Right lobe of liver (tissue), 6 donors: ENCODE measurements at regions of chr20 and their contacts with region 1.

Region 1: GRCh38 chr20:23606652-23607049 is 934 bp upstream of the CST9 start:
- DNase-seq: peak; percentile 72 to 79 (median 78)
- ATAC-seq: peak; percentile 91 to 98 (median 96)
- H3K4me3 ChIP-seq: no peak overlapping the region
- H3K27ac ChIP-seq: no peak overlapping the region
- H3K4me1 ChIP-seq: no peaks in the 10 kb centered on the region
- H3K27me3 ChIP-seq: no peaks in the 10 kb centered on the region
- CTCF ChIP-seq: peak; percentile 81 to 87 (median 83)
- POLR2A ChIP-seq: no peak

Region 2: GRCh38 chr20:23349338-23350195 is 257.1 kb before region 1 on chr20:
- intact Hi-C with region 1: loop called in 1 of 2 experiments (anchors 10 kb)
- DNase-seq: peak in 2 of 3 donors; percentile 79 to 84
- ATAC-seq: peak; percentile 72 to 77 (median 76)
- H3K4me3 ChIP-seq: peak overlapping the region; percentile 91 to 98 (median 94)
- H3K27ac ChIP-seq: peak overlapping the region; percentile 95 to 98 (median 96)
- H3K4me1 ChIP-seq: peaks cover 0 to 16% (median 3%) of the 10 kb centered on the region in 4 donors
- H3K27me3 ChIP-seq: no peaks in the 10 kb centered on the region
- CTCF ChIP-seq: peak; percentile 43 to 47 (median 44)
- POLR2A ChIP-seq: no peak

Region 3: DNA sequence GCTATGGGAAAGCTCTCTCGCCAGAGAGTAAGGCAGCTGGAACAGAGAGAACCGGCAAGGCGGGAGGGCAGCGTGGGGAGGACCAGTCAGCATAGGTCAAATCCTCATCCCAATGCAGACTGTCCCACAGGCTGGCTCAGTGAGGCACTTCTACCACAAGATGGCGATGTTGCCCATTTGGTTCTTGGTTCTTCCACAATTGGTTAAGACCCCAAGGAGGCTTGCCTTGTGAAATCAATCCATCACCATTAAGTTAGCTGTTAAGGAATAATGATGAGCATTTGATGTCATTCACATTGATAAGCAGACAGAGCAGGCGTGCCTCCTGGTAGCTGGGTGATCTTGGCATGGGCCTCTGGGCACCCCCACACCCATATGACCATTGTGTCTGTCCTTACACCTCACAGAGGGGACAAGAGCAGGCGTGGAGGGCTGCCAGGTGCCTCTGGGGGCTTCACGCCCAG is 164.8 kb before region 1 on chr20:
- intact Hi-C with region 1: loop called (anchors 5 to 10 kb)
- DNase-seq: peak in 2 of 3 donors; percentile 40 to 61
- ATAC-seq: peak; percentile 81 to 91 (median 88)
- H3K4me3 ChIP-seq: no peak overlapping the region
- H3K27ac ChIP-seq: no peak overlapping the region
- H3K4me1 ChIP-seq: peaks cover 0 to 1% (median 0%) of the 10 kb centered on the region in 4 donors
- H3K27me3 ChIP-seq: no peaks in the 10 kb centered on the region
- CTCF ChIP-seq: peak; percentile 58 to 93 (median 92)
- POLR2A ChIP-seq: no peak

Region 4: GRCh38 chr20:23459461-23460150 is 147.0 kb before region 1 on chr20:
- intact Hi-C with region 1: no loop called
- DNase-seq: no peak
- ATAC-seq: peak in 1 of 4 donors; percentile 22
- H3K4me3 ChIP-seq: no peak overlapping the region
- H3K27ac ChIP-seq: no peak overlapping the region
- H3K4me1 ChIP-seq: no peaks in the 10 kb centered on the region
- H3K27me3 ChIP-seq: no peaks in the 10 kb centered on the region
- CTCF ChIP-seq: no peak
- POLR2A ChIP-seq: no peak